ENCODE measurements at regions of chr1 and their contacts with region 1.

Region 1: GRCh38 chr1:15820478-15820877 is 13.0 kb upstream of the UQCRHL start:
- DNase-seq: no peak
- ATAC-seq: peak; percentile 49
- H3K4me3 ChIP-seq: no peak overlapping the region
- H3K27ac ChIP-seq: no peak overlapping the region
- H3K4me1 ChIP-seq: peaks cover 3% of the 10 kb centered on the region; the same call in 1 of the 2 replicates
- H3K27me3 ChIP-seq: no peaks in the 10 kb centered on the region
- CTCF ChIP-seq: no peak

Region 2: DNA sequence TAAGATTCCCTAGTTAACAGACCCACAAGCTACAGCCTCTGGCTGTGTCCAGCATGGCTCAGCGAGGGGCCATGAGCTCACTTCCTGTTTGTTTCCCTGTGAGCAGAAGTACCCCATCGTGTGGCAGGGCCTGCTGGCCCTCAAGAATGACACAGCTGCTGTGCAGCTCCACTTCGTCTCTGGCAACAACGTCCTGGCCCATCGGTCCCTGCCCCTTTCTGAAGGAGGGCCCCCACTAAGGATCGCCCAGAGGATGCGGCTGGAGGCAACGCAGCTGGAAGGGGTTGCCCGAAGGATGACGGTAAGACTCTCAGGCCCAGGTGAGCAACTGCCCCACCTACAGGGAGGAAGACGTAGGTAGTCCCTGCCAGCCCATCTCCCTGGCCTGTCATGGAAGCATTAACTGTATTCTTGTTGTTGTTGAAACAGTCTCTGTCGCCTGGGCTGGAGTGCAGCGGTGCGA is 117.3 kb after region 1 on chr1:
- CTCF ChIA-PET with region 1: interaction called, 12 read pairs
- POLR2A ChIA-PET with region 1: no interaction called
- in situ Hi-C with region 1: no loop called
- intact Hi-C with region 1: no loop called
- DNase-seq: no peak
- ATAC-seq: no peak
- H3K4me3 ChIP-seq: no peak overlapping the region
- H3K27ac ChIP-seq: peak overlapping the region; percentile 48; the same call in 1 of the 2 replicates
- H3K4me1 ChIP-seq: peaks cover 18% of the 10 kb centered on the region
- H3K27me3 ChIP-seq: no peaks in the 10 kb centered on the region
- CTCF ChIP-seq: no peak